HepG2 (cell line): ENCODE measurements at regions of chr12 and their contacts with region 1.

Region 1: GRCh38 chr12:91974512-91975085 is 171.0 kb downstream of the BTG1 start:
- DNase-seq: no peak
- ATAC-seq: no peak
- H3K4me3 ChIP-seq: no peak overlapping the region
- H3K27ac ChIP-seq: no peak overlapping the region
- H3K4me1 ChIP-seq: no peaks in the 10 kb centered on the region
- H3K27me3 ChIP-seq: no peaks in the 10 kb centered on the region
- CTCF ChIP-seq: no peak
- EP300 ChIP-seq: no peak
- POLR2A ChIP-seq: no peak
- RAD21 ChIP-seq: no peak

Region 2: GRCh38 chr12:91893470-91893869 is 81.1 kb before region 1 on chr12:
- CTCF ChIA-PET with region 1: no interaction called
- POLR2A ChIA-PET with region 1: no interaction called
- in situ Hi-C with region 1: no loop called
- intact Hi-C with region 1: loop called (anchors 1 kb)
- DNase-seq: no peak
- ATAC-seq: no peak
- H3K4me3 ChIP-seq: no peak overlapping the region
- H3K27ac ChIP-seq: no peak overlapping the region
- H3K4me1 ChIP-seq: no peaks in the 10 kb centered on the region
- H3K27me3 ChIP-seq: no peaks in the 10 kb centered on the region
- CTCF ChIP-seq: no peak
- EP300 ChIP-seq: no peak
- POLR2A ChIP-seq: no peak
- RAD21 ChIP-seq: no peak

Region 3: GRCh38 chr12:91940826-91941570 is 33.6 kb before region 1 on chr12:
- CTCF ChIA-PET with region 1: no interaction called
- POLR2A ChIA-PET with region 1: no interaction called
- in situ Hi-C with region 1: no loop called
- intact Hi-C with region 1: no loop called
- DNase-seq: no peak
- ATAC-seq: no peak
- H3K4me3 ChIP-seq: no peak overlapping the region
- H3K27ac ChIP-seq: no peak overlapping the region
- H3K4me1 ChIP-seq: no peaks in the 10 kb centered on the region
- H3K27me3 ChIP-seq: no peaks in the 10 kb centered on the region
- CTCF ChIP-seq: no peak
- EP300 ChIP-seq: no peak
- POLR2A ChIP-seq: no peak
- RAD21 ChIP-seq: no peak

Region 4: GRCh38 chr12:92145731-92146496 is 171.3 kb after region 1 on chr12 and contains the start of gene BTG1:
- CTCF ChIA-PET with region 1: no interaction called
- POLR2A ChIA-PET with region 1: no interaction called
- in situ Hi-C with region 1: no loop called
- intact Hi-C with region 1: no loop called
- DNase-seq: peak; percentile 98
- ATAC-seq: peak; percentile 86
- H3K4me3 ChIP-seq: peak within 1 kb of the TSS; percentile 94 to 99 (median 98)
- H3K27ac ChIP-seq: peak within 1 kb of the TSS; percentile 64
- H3K4me1 ChIP-seq: peaks cover 40% of the 10 kb centered on the region
- H3K27me3 ChIP-seq: peaks cover 0 to 3% of the 10 kb centered on the region in 2 experiments; a peak in 1 of 5 replicates
- CTCF ChIP-seq: 0 out of 2 replicates have a peak, but pooled peaks have one; percentile 11
- EP300 ChIP-seq: no peak
- POLR2A ChIP-seq: peak; percentile 98 to 100
- RAD21 ChIP-seq: 0 out of 2 replicates have a peak, but pooled peaks have one; percentile 21
- total RNA-seq, gene BTG1: 7.5 and 9.8 TPM in 2 replicates